MCF 10A (cell line): ENCODE measurements at regions of chr2 and their contacts with region 1.

Region 1: DNA sequence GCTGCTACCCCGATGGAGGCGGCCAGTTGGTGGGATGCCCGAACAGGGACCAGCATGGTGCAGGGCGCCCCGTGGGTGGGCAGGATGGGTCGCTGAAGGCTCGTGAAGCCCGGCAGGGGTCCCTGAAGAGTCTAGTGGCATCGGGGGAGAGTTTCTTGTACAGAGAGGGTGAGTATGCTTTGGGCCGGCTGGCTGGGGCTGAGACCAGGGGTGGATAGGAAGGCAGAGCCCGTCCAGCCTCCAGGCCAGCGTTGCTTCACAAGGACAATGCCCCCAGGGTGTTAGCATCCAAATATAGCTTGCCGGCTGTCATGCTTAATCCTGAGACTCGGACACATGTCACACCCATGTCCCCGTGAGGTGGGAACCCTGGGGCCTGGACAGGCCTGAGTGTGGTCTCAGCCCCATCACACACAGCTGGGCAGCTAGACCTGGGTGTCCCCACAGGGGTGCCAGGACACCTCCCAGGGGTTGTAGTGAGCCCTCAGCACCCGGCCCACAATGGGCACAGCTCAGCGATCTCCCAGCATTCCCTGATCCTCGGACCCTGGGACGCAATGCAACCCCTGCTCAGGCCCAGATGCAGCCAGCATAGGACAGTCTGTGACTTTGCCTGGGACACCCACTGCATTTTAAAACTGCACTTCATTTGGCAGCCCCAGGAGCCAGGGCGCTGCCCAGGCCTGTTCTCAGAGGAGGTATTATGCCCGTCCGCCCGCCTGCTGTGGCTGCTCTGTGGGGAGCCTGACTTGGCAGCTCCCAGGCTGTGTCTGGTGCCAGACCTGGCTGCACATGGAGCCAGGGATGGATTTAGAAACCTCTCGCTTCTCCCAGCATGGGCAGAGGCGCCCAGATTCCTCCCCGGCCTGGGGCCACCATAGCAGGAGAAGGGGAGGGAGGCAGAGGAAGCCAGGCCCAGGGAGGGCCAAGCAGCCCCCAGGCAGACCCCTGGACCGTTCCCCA is 36.4 kb downstream of the RAMP1 start:
- DNase-seq: peak; percentile 91
- H3K4me3 Mint-ChIP-seq: no peak overlapping the region
- H3K27ac Mint-ChIP-seq: peak overlapping the region; percentile 92
- H3K4me1 Mint-ChIP-seq: peaks cover 27% of the 10 kb centered on the region
- H3K27me3 Mint-ChIP-seq: no peaks in the 10 kb centered on the region
- CTCF ChIP-seq: no peak

Region 2: GRCh38 chr2:237874585-237875161 is 21.2 kb before region 1 on chr2:
- CTCF ChIA-PET with region 1: interaction called, 4 read pairs
- POLR2A ChIA-PET with region 1: interaction called, 53 read pairs
- intact Hi-C with region 1: no loop called
- DNase-seq: peak; percentile 93
- H3K4me3 Mint-ChIP-seq: peak overlapping the region; percentile 4
- H3K27ac Mint-ChIP-seq: peak overlapping the region; percentile 86
- H3K4me1 Mint-ChIP-seq: peaks cover 44% of the 10 kb centered on the region
- H3K27me3 Mint-ChIP-seq: no peaks in the 10 kb centered on the region
- CTCF ChIP-seq: no peak

Region 3: DNA sequence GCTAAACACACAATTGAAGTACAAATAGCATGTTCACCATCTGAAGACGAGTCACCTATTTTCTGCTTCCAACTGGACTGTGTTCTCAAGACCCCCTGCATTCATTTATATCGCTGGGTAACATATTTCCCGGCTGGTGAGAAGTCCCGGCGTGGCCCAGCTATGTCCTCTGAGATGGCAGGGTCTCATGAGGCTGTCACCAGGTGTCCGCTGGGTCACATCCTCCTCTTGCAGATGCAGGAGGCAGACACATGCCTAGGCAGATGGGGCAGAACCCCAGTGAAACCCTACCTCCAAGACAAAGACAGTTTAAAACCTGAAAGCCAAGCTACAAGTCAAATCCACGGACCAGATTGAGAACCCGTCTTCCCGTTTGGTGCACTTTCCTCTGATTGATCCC is 34.2 kb after region 1 on chr2:
- CTCF ChIA-PET with region 1: no interaction called
- POLR2A ChIA-PET with region 1: no interaction called
- intact Hi-C with region 1: no loop called
- DNase-seq: no peak
- H3K4me3 Mint-ChIP-seq: no peak overlapping the region
- H3K27ac Mint-ChIP-seq: no peak overlapping the region
- H3K4me1 Mint-ChIP-seq: peaks cover 23% of the 10 kb centered on the region
- H3K27me3 Mint-ChIP-seq: no peaks in the 10 kb centered on the region
- CTCF ChIP-seq: no peak